A673 (cell line): ENCODE measurements at regions of chr12 and their contacts with region 1.

Region 1: DNA sequence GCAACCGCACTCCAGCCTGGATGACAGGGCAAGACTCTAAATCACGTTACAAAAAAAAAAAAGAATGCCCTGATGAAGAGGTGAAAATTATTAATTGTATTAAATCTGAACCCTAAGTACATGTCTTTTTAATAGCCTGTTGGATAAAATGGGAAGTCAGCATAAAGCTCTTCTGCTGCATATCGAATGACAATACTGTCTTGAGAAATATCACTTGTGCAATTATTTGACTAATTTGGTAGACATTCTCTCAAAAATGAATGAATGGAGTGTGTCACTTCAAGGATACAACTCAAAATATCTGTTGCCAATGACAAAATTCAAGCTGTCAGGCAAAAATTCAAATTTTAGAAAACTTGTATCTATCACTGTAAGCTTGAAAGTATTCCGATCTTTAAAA is 38.9 kb downstream of the DNAI7 start:
- DNase-seq: no peak
- H3K4me3 ChIP-seq: no peak overlapping the region
- H3K27ac ChIP-seq: no peak overlapping the region
- H3K4me1 ChIP-seq: no peaks in the 10 kb centered on the region
- H3K27me3 ChIP-seq: no peaks in the 10 kb centered on the region
- CTCF ChIP-seq: no peak

Region 2: DNA sequence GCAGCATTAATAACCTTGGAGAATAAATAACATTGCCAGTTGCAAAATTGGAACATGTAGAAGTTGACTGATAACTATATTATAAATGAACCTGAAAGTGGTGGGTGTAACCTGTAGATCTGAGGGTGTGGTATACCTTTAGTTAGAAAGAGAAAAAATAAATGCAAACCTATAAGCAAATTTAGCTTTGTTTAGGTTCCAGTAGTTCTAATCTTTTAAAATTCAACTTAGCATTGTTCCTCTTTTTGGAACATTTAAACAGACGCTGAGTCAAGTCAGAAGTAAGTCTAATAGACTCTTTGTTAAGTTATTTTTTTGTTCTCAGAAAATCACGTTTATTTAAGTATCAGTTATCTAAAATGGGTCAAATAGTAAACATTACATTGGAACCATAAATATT is 81.1 kb before region 1 on chr12:
- CTCF ChIA-PET with region 1: no interaction called
- POLR2A ChIA-PET with region 1: no interaction called
- intact Hi-C with region 1: no loop called
- DNase-seq: no peak
- H3K4me3 ChIP-seq: no peak overlapping the region
- H3K27ac ChIP-seq: no peak overlapping the region
- H3K4me1 ChIP-seq: no peaks in the 10 kb centered on the region
- H3K27me3 ChIP-seq: no peaks in the 10 kb centered on the region
- CTCF ChIP-seq: no peak

Region 3: DNA sequence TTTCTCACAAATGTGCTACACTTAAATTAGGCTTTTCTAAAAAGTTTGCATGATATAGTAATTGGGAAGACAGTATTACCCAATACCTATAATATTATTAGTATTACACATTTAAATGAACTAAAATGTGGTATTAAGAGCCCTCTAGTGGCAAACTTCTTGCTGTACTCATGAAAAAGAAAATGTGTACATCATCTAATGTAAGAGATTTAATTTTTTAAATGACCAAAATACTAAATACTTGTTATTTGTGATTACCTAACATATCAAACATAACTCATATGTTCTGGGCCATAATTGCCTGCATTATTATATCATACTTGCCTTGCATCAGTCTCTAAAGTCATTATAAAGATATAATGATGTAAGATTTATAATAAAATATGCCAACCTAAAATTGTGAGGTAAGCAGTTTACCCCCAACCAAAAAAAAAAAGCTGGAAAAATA is 25.3 kb before region 1 on chr12:
- CTCF ChIA-PET with region 1: no interaction called
- POLR2A ChIA-PET with region 1: no interaction called
- intact Hi-C with region 1: no loop called
- DNase-seq: peak; percentile 68
- H3K4me3 ChIP-seq: no peak overlapping the region
- H3K27ac ChIP-seq: no peak overlapping the region
- H3K4me1 ChIP-seq: no peaks in the 10 kb centered on the region
- H3K27me3 ChIP-seq: no peaks in the 10 kb centered on the region
- CTCF ChIP-seq: peak; percentile 75

Region 4: GRCh38 chr12:25458047-25458552 is 302.0 kb after region 1 on chr12:
- CTCF ChIA-PET with region 1: interaction called, 11 read pairs
- POLR2A ChIA-PET with region 1: no interaction called
- intact Hi-C with region 1: no loop called
- DNase-seq: peak; percentile 85
- H3K4me3 ChIP-seq: no peak overlapping the region
- H3K27ac ChIP-seq: no peak overlapping the region
- H3K4me1 ChIP-seq: peaks cover 4% of the 10 kb centered on the region
- H3K27me3 ChIP-seq: no peaks in the 10 kb centered on the region
- CTCF ChIP-seq: no peak